ENCODE measurements at regions of chr4 and their contacts with region 1.

Region 1: GRCh38 chr4:106315968-106316772 is at the starts of genes AIMP1 and TBCK:
- DNase-seq: peak; percentile 88 to 95
- ATAC-seq: peak; percentile 84 to 94 (median 88)
- H3K4me3 ChIP-seq: peak within 1 kb of the TSS; percentile 87
- H3K4me3 Mint-ChIP-seq: no peak within 1 kb of the TSS
- H3K27ac ChIP-seq: peak within 1 kb of the TSS; percentile 97
- H3K27ac Mint-ChIP-seq: no peak within 1 kb of the TSS
- H3K4me1 ChIP-seq: peaks cover 15% of the 10 kb centered on the region
- H3K4me1 Mint-ChIP-seq: peaks cover 5 to 30% of the 10 kb centered on the region in 2 donors
- H3K27me3 ChIP-seq: no peaks in the 10 kb centered on the region
- H3K27me3 Mint-ChIP-seq: no peaks in the 10 kb centered on the region
- CTCF ChIP-seq: no peak
- total RNA-seq, gene AIMP1: 37.7 to 46.8 (median 40.3) TPM
- total RNA-seq, gene TBCK: 49.5 to 78.5 (median 54.2) TPM

Region 2: DNA sequence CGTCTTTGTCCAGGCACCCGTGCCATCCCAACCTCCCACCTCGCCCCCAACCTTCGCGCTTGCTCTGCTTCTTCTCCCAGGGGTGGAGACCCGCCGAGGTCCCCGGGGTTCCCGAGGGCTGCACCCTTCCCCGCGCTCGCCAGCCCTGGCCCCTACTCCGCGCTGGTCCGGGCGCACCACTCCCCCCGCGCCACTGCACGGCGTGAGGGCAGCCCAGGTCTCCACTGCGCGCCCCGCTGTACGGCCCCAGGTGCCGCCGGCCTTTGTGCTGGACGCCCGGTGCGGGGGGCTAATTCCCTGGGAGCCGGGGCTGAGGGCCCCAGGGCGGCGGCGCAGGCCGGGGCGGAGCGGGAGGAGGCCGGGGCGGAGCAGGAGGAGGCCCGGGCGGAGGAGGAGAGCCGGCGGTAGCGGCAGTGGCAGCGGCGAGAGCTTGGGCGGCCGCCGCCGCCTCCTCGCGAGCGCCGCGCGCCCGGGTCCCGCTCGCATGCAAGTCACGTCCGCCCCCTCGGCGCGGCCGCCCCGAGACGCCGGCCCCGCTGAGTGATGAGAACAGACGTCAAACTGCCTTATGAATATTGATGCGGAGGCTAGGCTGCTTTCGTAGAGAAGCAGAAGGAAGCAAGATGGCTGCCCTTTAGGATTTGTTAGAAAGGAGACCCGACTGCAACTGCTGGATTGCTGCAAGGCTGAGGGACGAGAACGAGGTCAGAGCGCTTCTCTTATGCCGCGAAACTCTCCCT is 1169.7 kb before region 1 on chr4 and contains the start of gene TET2:
- intact Hi-C with region 1: loop called (anchors 10 kb)
- DNase-seq: peak; percentile 72 to 90
- ATAC-seq: peak; percentile 87 to 95 (median 92)
- H3K4me3 ChIP-seq: peak within 1 kb of the TSS; percentile 67
- H3K4me3 Mint-ChIP-seq: peak within 1 kb of the TSS; percentile 97
- H3K27ac ChIP-seq: peak within 1 kb of the TSS; percentile 84
- H3K27ac Mint-ChIP-seq: peak within 1 kb of the TSS; percentile 96 to 99
- H3K4me1 ChIP-seq: peaks cover 4% of the 10 kb centered on the region
- H3K4me1 Mint-ChIP-seq: peaks cover 54 to 56% of the 10 kb centered on the region in 2 donors
- H3K27me3 ChIP-seq: no peaks in the 10 kb centered on the region
- H3K27me3 Mint-ChIP-seq: no peaks in the 10 kb centered on the region
- CTCF ChIP-seq: no peak
- total RNA-seq, gene TET2: 80.0 to 91.6 (median 82.8) TPM

Region 3: DNA sequence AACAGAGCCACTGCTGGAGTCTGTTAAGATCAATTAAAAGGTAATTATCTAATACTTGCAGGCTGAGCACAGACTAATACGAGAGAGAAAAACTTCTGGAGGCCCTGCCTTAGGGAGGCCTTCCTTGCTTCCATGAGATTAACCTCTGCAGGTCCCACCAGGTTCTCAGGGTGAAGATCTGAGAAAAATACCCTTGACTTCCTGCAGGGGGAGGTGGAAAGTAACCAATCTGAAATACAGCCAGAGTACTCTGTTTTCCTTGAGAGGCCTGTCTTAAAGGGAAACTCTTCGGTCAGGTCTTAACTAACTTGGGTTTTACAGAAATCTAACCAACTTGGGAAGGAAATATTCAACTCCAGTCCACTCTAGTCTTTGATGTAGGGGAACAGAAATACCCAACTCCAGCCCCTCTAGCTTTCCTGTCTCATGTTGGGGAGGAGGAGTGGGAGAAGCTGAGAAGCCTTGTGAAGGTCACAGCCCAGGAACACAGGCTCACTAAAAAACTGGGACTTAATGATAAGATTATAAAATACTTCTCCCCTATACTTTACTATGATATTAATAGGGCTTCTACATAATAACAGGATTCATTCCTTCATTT is 77.2 kb before region 1 on chr4:
- intact Hi-C with region 1: no loop called
- DNase-seq: peak in 1 of 2 donors; percentile 35
- ATAC-seq: peak in 2 of 3 donors; percentile 52 to 53
- H3K4me3 ChIP-seq: no peak overlapping the region
- H3K4me3 Mint-ChIP-seq: no peak overlapping the region
- H3K27ac ChIP-seq: no peak overlapping the region
- H3K27ac Mint-ChIP-seq: no peak overlapping the region
- H3K4me1 ChIP-seq: no peaks in the 10 kb centered on the region
- H3K4me1 Mint-ChIP-seq: no peaks in the 10 kb centered on the region
- H3K27me3 ChIP-seq: no peaks in the 10 kb centered on the region
- H3K27me3 Mint-ChIP-seq: no peaks in the 10 kb centered on the region
- CTCF ChIP-seq: peak; percentile 56

Region 4: DNA sequence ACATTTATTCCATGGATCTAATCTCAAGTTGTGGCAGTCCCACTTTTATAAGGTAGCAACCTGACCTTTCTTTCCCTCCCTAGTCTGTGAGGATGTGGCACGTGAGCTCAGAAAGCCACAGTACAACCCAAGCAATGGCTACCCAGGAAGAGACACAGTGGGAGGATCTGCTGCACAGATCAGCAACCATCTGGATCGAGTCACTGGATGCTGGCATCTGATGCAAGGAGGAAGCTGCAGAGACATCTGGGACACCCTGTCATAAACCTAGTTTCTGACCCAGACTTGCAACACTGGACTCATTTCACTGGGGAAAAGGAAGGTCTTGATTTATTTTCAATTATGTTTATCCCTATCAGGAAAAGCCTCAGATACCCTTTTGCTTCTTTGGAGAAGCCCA is 1076.8 kb after region 1 on chr4:
- intact Hi-C with region 1: no loop called
- DNase-seq: no peak
- ATAC-seq: no peak
- H3K4me3 ChIP-seq: no peak overlapping the region
- H3K4me3 Mint-ChIP-seq: no peak overlapping the region
- H3K27ac ChIP-seq: no peak overlapping the region
- H3K27ac Mint-ChIP-seq: no peak overlapping the region
- H3K4me1 ChIP-seq: no peaks in the 10 kb centered on the region
- H3K4me1 Mint-ChIP-seq: no peaks in the 10 kb centered on the region
- H3K27me3 ChIP-seq: no peaks in the 10 kb centered on the region
- H3K27me3 Mint-ChIP-seq: no peaks in the 10 kb centered on the region
- CTCF ChIP-seq: no peak

Region 5: GRCh38 chr4:107719922-107720722 is 1404.0 kb after region 1 on chr4 and contains the start of gene PAPSS1:
- intact Hi-C with region 1: loop called (anchors 1 kb)
- DNase-seq: peak; percentile 91 to 99
- ATAC-seq: peak; percentile 86 to 98 (median 90)
- H3K4me3 ChIP-seq: peak within 1 kb of the TSS; percentile 76
- H3K4me3 Mint-ChIP-seq: peak within 1 kb of the TSS; percentile 97
- H3K27ac ChIP-seq: peak within 1 kb of the TSS; percentile 75
- H3K27ac Mint-ChIP-seq: peak within 1 kb of the TSS; percentile 90 to 95
- H3K4me1 ChIP-seq: peaks cover 18% of the 10 kb centered on the region
- H3K4me1 Mint-ChIP-seq: peaks cover 29 to 37% of the 10 kb centered on the region in 2 donors
- H3K27me3 ChIP-seq: no peaks in the 10 kb centered on the region
- H3K27me3 Mint-ChIP-seq: peaks cover 4 to 5% of the 10 kb centered on the region in 2 donors
- CTCF ChIP-seq: no peak
- total RNA-seq, gene PAPSS1: 10.2 to 21.3 (median 12.9) TPM